ENCODE measurements at regions of chr16 and their contacts with region 1.

Region 1: GRCh38 chr16:68244903-68245853 is at the start of gene PLA2G15:
- DNase-seq: peak; percentile 94 to 96
- H3K4me3 ChIP-seq: peak within 1 kb of the TSS; percentile 71 to 83 (median 77)
- H3K27ac ChIP-seq: peak within 1 kb of the TSS in 2 of 3 donors; percentile 35 to 61
- H3K4me1 ChIP-seq: peaks cover 22 to 28% of the 10 kb centered on the region in 2 donors
- H3K27me3 ChIP-seq: no peaks in the 10 kb centered on the region
- CTCF ChIP-seq: no peak
- POLR2A ChIP-seq: peak in 1 of 2 donors; percentile 74
- total RNA-seq, gene PLA2G15: 20.8 to 40.3 (median 38.4) TPM

Region 2: DNA sequence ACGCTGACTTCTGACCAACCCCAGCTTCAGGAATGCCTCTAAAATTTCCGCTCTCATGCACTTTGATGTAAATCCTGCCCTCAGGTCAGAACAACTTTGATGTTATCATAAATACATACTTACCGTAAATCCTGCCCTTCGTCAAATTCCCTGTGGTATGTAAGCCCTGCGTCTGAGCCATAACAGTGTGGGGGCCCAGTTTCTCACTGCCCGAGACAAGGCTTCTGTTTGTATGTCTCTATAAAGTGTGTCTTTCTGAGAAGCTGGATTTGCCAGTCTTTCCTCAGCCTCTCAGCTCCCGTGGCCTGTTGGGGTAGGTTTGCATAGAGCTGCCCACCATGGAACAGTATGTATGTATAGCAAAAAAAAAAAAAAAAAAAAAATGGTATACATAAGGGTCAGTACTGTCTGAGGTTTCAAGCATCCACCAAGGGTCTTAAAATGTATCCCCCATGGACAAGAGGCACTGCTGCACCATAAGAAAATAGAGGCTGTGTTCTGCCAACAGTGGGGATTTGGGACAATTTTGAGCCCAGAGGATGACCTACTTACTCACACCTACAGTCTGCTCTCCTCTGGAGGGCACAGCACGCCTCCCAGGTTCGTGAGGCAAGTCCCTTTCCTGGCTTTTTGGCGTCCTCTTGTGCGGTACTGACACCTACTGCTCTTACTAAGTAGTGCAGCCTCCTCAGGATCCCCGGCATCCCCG is 83.1 kb after region 1 on chr16:
- intact Hi-C with region 1: loop called (anchors 5 kb)
- DNase-seq: peak; percentile 86 to 90
- H3K4me3 ChIP-seq: no peak overlapping the region
- H3K27ac ChIP-seq: no peak overlapping the region
- H3K4me1 ChIP-seq: peaks cover 10 to 34% of the 10 kb centered on the region in 2 donors
- H3K27me3 ChIP-seq: no peaks in the 10 kb centered on the region
- CTCF ChIP-seq: peak; percentile 78 to 98 (median 97)
- POLR2A ChIP-seq: no peak

Region 3: DNA sequence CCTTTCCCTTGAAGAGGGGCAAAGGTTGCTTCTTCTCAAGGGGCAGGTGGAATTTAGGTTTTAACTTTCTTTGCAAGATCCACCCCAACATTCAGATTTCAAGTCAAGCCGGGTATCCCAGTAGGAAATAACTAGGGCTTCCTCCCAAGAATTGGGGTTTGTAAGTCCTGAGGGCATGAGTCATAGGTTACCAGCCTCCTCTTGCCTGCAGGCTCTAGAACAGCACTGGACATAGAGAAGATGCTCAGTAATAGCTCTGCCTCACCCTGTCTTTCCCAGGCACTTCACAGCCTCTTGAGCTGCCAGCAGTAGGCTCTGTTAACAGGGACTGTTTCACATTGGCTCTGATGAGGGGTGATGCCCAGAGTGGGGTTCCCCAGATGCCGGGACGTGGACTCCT is 258.2 kb after region 1 on chr16:
- intact Hi-C with region 1: loop called (anchors 10 kb)
- DNase-seq: no peak
- H3K4me3 ChIP-seq: no peak overlapping the region
- H3K27ac ChIP-seq: no peak overlapping the region
- H3K4me1 ChIP-seq: no peaks in the 10 kb centered on the region
- H3K27me3 ChIP-seq: no peaks in the 10 kb centered on the region
- CTCF ChIP-seq: no peak
- POLR2A ChIP-seq: no peak